ENCODE measurements at regions of chr4 and their contacts with region 1.

Region 1: GRCh38 chr4:140756319-140757231 is at the start of gene TBC1D9:
- DNase-seq: peak; percentile 88 to 91 (median 89)
- ATAC-seq: peak; percentile 84 to 92 (median 87)
- H3K4me3 ChIP-seq: peak within 1 kb of the TSS; percentile 59 to 95 (median 86)
- H3K27ac ChIP-seq: peak within 1 kb of the TSS; percentile 89 to 100 (median 98)
- H3K4me1 ChIP-seq: peaks cover 0 to 44% (median 15%) of the 10 kb centered on the region in 12 donors
- H3K27me3 ChIP-seq: no peaks in the 10 kb centered on the region
- CTCF ChIP-seq: peak in 4 of 12 donors; percentile 0 to 26 (median 16)
- POLR2A ChIP-seq: peak in 1 of 2 donors; percentile 56
- total RNA-seq, gene TBC1D9: 8.5 to 26.5 (median 15.0) TPM

Region 2: GRCh38 chr4:140373328-140374129 is 383.0 kb before region 1 on chr4 and contains the start of gene SCOC:
- intact Hi-C with region 1: loop called in 2 of 10 experiments (anchors 10 kb)
- DNase-seq: peak; percentile 99 to 100 (median 99)
- ATAC-seq: peak; percentile 98 to 99 (median 99)
- H3K4me3 ChIP-seq: peak within 1 kb of the TSS; percentile 77 to 96 (median 84)
- H3K27ac ChIP-seq: peak within 1 kb of the TSS; percentile 76 to 96 (median 94)
- H3K4me1 ChIP-seq: peaks cover 0 to 52% (median 31%) of the 10 kb centered on the region in 12 donors
- H3K27me3 ChIP-seq: no peaks in the 10 kb centered on the region
- CTCF ChIP-seq: peak in 1 of 12 donors; percentile 9
- POLR2A ChIP-seq: peak in 1 of 2 donors; percentile 74
- total RNA-seq, gene SCOC: 61.0 to 80.9 (median 70.3) TPM

Region 3: DNA sequence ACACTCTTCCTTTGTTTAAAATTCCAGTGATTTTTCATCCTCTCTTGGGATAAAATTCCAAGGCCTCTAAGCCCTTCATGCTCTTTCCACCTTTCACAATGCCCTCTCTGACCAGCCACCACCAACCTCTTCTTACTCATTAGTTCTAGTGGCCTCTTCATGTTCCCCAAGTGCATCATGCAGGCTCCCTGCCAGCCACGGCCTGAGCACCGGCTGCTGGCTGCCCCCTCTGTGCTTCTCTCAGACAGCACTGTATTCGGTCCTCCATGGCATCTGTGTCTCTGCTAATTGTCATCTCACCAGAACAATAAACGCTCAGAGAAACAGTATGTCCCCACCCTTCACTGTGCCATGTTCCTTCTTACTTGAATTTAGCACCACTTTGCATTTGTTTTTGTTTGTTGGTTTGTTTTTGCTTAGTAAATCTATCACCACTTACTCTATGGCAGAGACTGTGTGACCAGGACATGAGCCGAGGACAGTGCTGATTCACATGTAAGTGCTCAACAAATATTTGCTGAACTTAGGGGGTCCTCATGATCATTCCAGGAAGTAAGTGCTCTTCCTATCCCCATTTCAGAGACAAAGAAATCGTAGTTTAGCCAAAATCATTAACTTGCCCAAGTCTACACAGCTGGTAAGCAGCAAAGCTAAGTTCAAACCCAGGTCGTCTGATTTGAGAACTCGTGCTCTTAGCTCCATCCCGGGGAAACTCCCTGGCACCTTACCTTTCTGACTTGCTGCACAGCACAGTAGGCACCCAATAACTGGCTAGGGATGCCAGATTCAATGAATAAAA is 110.8 kb before region 1 on chr4:
- intact Hi-C with region 1: loop called in 5 of 10 experiments (anchors 5 to 10 kb)
- DNase-seq: peak; percentile 38 to 73 (median 65)
- ATAC-seq: peak; percentile 69 to 80 (median 71)
- H3K4me3 ChIP-seq: no peak overlapping the region
- H3K27ac ChIP-seq: peak overlapping the region in 4 of 12 donors; percentile 7 to 29 (median 21)
- H3K4me1 ChIP-seq: peaks cover 0 to 30% (median 5%) of the 10 kb centered on the region in 12 donors
- H3K27me3 ChIP-seq: no peaks in the 10 kb centered on the region
- CTCF ChIP-seq: no peak
- POLR2A ChIP-seq: no peak

Region 4: GRCh38 chr4:140697709-140698560 is 58.6 kb before region 1 on chr4:
- intact Hi-C with region 1: loop called in 6 of 10 experiments (anchors 5 to 10 kb)
- DNase-seq: no peak
- ATAC-seq: no peak
- H3K4me3 ChIP-seq: no peak overlapping the region
- H3K27ac ChIP-seq: no peak overlapping the region
- H3K4me1 ChIP-seq: peaks cover 0 to 37% (median 15%) of the 10 kb centered on the region in 12 donors
- H3K27me3 ChIP-seq: no peaks in the 10 kb centered on the region
- CTCF ChIP-seq: no peak
- POLR2A ChIP-seq: no peak

Region 5: GRCh38 chr4:140851032-140851636 is 94.6 kb after region 1 on chr4:
- intact Hi-C with region 1: loop called in 6 of 10 experiments (anchors 5 to 10 kb)
- DNase-seq: peak in 2 of 5 donors; percentile 37 to 52
- ATAC-seq: peak in 3 of 4 donors; percentile 59 to 65 (median 64)
- H3K4me3 ChIP-seq: no peak overlapping the region
- H3K27ac ChIP-seq: no peak overlapping the region
- H3K4me1 ChIP-seq: peaks cover 0 to 5% (median 2%) of the 10 kb centered on the region in 12 donors
- H3K27me3 ChIP-seq: no peaks in the 10 kb centered on the region
- CTCF ChIP-seq: peak; percentile 65 to 90 (median 82)
- POLR2A ChIP-seq: no peak